BJ (cell line): ENCODE measurements at regions of chr4 and their contacts with region 1.

Region 1: DNA sequence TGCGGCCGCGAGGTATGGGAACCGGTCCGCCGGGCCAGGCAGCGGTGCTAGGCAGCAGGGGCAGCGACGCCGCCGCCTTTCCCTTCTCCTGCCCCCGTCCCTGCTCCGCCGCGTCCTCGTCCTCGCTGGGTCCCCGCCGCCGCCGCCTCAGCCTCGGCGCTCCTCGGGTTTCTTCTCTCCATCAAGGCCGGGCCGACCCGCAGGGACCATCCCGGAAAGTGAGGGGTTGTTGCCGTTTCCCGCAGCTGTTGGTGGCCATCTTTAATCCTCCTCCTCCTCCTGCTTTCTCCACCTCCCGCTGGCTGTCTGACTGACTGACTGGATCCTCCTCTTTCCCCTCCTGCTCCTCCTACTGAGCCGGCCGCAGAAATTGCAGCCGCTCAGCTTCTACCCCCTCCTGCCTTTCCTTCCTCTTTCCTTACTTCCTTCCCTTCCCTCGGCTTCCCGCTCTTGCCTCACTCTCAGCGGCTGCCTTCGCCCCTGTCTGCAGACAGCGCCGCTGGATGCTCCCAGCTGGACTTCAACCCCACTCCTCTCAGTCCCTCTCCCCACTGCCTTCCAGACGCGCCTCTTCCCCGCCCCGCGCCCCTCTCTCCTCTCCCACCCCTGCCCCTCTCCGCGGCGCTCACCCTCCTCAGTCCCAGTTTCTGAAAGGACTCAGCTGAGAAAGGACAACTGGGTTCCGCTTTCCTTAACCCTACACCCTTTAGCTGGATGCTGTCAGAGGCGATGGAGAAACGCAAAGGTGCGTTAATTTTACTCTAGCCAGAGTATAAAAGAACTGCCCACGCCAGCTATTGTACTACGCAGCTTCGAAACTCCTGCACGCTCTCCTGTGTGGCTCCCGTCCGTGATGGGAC is at the start of gene WDFY3:
- DNase-seq: peak; percentile 51
- H3K4me3 ChIP-seq: peak within 1 kb of the TSS; percentile 91
- H3K27me3 ChIP-seq: no peaks in the 10 kb centered on the region
- CTCF ChIP-seq: peak; percentile 16; the same call in 1 of the 2 replicates
- polyA plus RNA-seq, gene WDFY3: 28.8 and 36.4 TPM in 2 replicates

Region 2: DNA sequence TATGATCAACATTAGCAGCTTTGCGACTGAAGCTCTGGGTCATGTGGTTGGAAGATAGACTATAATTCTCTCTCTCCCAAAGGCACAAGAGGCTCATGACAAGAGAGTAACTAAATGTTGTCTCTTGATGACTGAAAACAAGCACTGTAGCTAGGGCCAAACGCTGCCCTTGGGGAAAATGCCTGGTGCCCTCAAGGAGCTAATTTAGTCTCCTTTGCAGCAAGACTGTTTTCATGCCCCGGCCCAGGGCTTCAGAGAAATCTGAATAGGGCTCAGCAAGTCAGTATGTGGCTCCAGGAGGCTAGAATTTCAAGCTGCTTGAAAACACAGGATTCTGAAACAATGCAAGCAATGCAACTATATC is 1018.8 kb before region 1 on chr4:
- CTCF ChIA-PET with region 1: no interaction called
- POLR2A ChIA-PET with region 1: no interaction called
- DNase-seq: no peak
- H3K4me3 ChIP-seq: no peak overlapping the region
- H3K27me3 ChIP-seq: no peaks in the 10 kb centered on the region; the same call in 1 of the 2 replicates
- CTCF ChIP-seq: no peak

Region 3: GRCh38 chr4:84740057-84740456 is 226.6 kb before region 1 on chr4:
- CTCF ChIA-PET with region 1: interaction called, 13 read pairs
- POLR2A ChIA-PET with region 1: no interaction called
- DNase-seq: no peak
- H3K4me3 ChIP-seq: no peak overlapping the region
- H3K27me3 ChIP-seq: no peaks in the 10 kb centered on the region
- CTCF ChIP-seq: no peak

Region 4: DNA sequence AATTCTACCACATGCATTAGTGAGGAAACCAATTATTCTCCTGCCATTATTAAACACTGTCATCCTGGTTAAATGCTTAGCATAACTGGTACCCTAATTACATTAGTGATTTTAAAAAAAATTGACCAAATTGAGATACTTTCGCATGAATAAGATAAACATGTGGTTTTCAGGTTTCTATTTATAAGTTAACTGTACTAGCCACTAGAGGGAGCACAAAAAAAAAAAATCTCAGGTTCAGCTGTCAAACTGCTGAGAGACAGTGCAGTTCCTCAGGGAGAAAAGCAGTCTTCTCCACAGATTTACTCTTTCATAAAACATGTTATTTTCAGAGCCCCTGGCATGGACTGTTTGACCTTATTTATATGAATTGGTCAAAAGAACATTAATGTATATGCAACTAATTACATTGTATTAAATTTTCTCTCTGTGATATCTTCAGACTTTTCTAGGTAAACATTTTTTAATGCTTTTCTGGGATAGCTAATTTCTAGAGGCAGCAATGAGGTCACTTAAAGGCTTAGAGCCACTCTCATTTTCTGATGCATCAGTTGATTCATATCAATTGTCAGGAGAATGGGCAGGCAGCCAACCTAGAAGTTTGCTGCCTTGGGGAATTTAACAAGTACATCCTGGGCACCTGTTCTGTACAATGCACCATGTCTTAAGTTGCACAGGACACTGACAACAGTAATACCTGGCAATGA is 216.2 kb before region 1 on chr4:
- CTCF ChIA-PET with region 1: interaction called, 65 read pairs
- POLR2A ChIA-PET with region 1: no interaction called
- DNase-seq: no peak
- H3K4me3 ChIP-seq: no peak overlapping the region
- H3K27me3 ChIP-seq: no peaks in the 10 kb centered on the region
- CTCF ChIP-seq: peak; percentile 57

Region 5: GRCh38 chr4:85084380-85085094 is 117.9 kb after region 1 on chr4:
- CTCF ChIA-PET with region 1: no interaction called
- POLR2A ChIA-PET with region 1: no interaction called
- DNase-seq: no peak
- H3K4me3 ChIP-seq: no peak overlapping the region
- H3K27me3 ChIP-seq: no peaks in the 10 kb centered on the region
- CTCF ChIP-seq: peak; percentile 68